Calu3 (cell line): ENCODE measurements at regions of chr19 and their contacts with region 1.

Region 1: GRCh38 chr19:42051166-42052118 is 18.6 kb downstream of the GRIK5 start:
- DNase-seq: peak; percentile 56
- H3K4me3 Mint-ChIP-seq: no peak overlapping the region
- H3K27ac Mint-ChIP-seq: peak overlapping the region; percentile 43
- H3K4me1 Mint-ChIP-seq: peaks cover 24% of the 10 kb centered on the region
- H3K27me3 Mint-ChIP-seq: peaks cover 27% of the 10 kb centered on the region
- CTCF ChIP-seq: no peak

Region 2: GRCh38 chr19:42032431-42032830 is 19.0 kb before region 1 on chr19:
- CTCF ChIA-PET with region 1: interaction called, 10 read pairs
- intact Hi-C with region 1: no loop called
- DNase-seq: peak; percentile 28
- H3K4me3 Mint-ChIP-seq: no peak overlapping the region
- H3K27ac Mint-ChIP-seq: no peak overlapping the region
- H3K4me1 Mint-ChIP-seq: peaks cover 20% of the 10 kb centered on the region
- H3K27me3 Mint-ChIP-seq: peaks cover 29% of the 10 kb centered on the region
- CTCF ChIP-seq: no peak